ENCODE measurements at regions of chrX and their contacts with region 1.

Region 1: DNA sequence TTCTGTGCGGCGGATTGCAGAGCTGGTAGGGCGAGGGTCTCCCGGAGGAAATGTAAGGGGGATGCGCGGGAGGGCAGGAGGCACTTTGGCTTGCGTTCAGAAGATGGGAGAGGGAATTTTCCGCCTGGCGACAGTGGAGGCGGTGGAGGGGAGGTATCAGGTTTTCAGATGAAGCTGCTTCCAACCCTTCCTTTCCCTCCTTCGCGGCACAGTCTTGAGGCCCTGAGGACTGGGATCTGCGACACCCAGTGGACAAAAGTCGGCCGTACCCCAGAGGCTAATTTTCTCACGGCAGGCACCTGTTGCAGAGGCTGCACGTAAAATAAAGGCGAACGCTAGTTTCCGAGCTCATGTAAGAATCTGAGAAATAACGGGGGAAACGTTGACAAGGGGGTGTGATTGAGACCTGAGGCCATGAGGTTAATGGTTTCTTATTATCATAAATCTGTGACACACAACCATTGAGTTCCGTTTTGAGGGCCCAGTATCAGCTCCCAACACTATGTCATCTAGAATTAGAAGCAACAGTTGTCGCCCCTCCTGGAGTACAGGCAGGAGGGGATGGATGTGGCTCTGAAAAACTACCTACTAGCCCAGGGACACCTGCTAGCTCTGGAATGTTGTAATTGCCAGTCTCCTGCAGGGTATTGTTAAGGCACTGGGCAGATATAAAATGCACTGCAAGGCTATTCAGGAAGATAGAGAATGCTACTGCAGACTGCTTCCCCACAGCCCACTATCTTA is 1.1 kb downstream of the ZCCHC18 start:
- DNase-seq: no peak

Region 2: DNA sequence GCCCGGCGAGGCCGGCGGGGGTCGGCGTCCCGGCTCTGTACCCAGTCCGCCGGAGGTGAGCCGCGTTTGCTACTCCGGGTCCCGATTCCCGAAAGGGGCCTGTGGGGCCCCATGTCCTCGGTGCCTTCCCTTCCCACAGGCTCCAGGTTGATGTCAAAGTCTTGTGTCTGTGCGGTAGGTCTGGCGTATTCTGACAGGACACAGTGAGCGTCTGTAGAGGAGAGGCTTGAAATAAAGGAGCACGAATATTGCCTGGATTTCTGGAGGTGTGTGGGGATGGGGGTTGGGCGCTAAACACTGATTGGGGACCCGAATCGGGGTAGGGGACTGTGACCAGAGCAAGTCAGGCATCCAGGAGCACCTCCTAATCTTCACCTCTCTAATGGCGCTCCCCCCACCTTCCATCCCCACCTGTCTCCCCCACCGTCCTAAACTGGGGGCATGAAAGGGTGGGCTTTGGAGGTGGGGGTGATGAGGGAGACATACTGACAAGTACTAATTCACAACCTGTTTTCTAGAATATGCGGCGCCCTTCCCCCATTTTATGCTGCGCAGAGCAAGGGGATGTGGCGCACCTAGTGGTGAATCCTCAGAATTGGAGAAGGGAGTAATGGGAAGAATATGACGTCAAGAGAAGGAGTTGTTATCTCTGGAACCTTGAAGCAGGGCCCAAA is 1400.3 kb before region 1 on chrX:
- intact Hi-C with region 1: loop called in 1 of 2 experiments (anchors 5 kb)
- DNase-seq: no peak

Region 3: GRCh38 chrX:104130808-104131207 is 17.4 kb after region 1 on chrX:
- intact Hi-C with region 1: loop called in 1 of 2 experiments (anchors 2 kb)
- DNase-seq: no peak